Uterus (tissue), 4 donors: ENCODE measurements at regions of chr11 and their contacts with region 1.

Region 1: DNA sequence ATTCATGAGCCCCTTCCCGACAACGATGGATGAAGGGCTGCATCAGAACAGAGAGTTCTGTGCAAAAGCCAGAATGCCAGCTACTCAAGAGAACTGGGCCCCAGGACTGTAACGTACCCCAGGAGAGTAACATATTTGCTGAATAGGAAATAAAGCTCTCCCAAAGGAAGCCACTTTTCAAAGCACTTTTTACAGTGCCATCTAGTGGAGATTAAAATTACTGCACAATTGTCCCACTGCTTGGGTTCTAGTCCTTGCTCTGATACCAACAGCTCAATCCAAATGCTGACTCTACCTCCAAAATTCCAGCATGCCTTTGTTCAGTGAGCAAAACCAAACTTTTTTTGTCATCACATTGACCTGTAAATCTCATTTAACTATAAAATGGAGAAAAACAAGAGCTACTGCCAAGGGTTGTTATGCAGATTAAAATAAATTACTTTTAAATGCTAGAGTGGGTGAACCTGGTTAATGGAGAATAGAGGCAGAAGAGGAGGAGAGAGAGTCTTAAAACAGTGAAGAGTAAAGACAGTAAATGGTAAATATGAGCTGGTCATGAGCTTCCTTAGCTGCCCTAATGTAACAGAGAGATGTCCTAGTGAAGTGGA is 87.6 kb upstream of the FSHB start:
- DNase-seq: no peak
- H3K4me3 ChIP-seq: no peak overlapping the region
- H3K27ac ChIP-seq: no peak overlapping the region
- H3K4me1 ChIP-seq: no peaks in the 10 kb centered on the region
- H3K27me3 ChIP-seq: no peaks in the 10 kb centered on the region
- CTCF ChIP-seq: peak; percentile 24 to 53 (median 36)
- POLR2A ChIP-seq: no peak

Region 2: GRCh38 chr11:29448246-29448877 is 694.8 kb before region 1 on chr11:
- intact Hi-C with region 1: loop called (anchors 10 kb)
- DNase-seq: no peak
- H3K4me3 ChIP-seq: no peak overlapping the region
- H3K27ac ChIP-seq: no peak overlapping the region
- H3K4me1 ChIP-seq: no peaks in the 10 kb centered on the region
- H3K27me3 ChIP-seq: no peaks in the 10 kb centered on the region
- CTCF ChIP-seq: peak; percentile 20 to 51 (median 40)
- POLR2A ChIP-seq: no peak

Region 3: GRCh38 chr11:29801561-29801960 is 341.6 kb before region 1 on chr11:
- intact Hi-C with region 1: no loop called
- DNase-seq: no peak
- H3K4me3 ChIP-seq: no peak overlapping the region
- H3K27ac ChIP-seq: no peak overlapping the region
- H3K4me1 ChIP-seq: no peaks in the 10 kb centered on the region
- H3K27me3 ChIP-seq: no peaks in the 10 kb centered on the region
- CTCF ChIP-seq: no peak
- POLR2A ChIP-seq: no peak

Region 4: DNA sequence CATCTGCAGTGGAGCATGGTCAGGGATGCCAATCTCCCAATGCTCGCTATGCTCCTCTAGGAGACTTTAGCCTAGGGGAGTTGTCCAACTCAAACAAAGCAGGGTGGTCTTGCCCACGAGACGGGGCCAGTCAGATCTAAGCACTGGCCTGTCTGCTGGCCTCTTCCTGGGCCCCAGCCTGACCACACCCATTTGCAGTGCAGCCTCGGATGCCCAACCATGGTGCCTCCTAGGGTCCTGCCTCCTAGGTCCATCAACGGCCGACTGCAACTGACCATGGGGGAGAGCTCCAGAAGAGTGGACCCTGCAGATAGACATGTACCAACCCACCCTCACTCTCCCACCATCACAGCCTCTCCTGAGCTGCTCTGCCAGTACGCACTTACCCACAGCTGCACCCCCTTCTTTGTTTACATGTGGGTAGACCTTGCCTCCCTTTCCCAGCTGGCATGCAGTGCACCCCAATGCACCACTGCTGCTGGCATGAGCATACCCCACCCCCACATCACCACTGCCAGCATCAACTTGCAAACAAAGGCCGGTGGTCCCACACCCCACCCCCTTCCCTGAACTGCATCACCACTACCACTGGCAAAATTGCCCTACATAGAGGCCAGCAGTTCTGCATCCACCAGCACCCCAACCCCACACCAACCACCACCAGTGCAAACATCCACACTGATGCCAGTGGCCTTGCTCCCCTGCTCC is 152.1 kb after region 1 on chr11:
- intact Hi-C with region 1: no loop called
- DNase-seq: no peak
- H3K4me3 ChIP-seq: no peak overlapping the region
- H3K27ac ChIP-seq: no peak overlapping the region
- H3K4me1 ChIP-seq: no peaks in the 10 kb centered on the region
- H3K27me3 ChIP-seq: no peaks in the 10 kb centered on the region
- CTCF ChIP-seq: no peak
- POLR2A ChIP-seq: no peak